Upper lobe of right lung (tissue), 1 donor: ENCODE measurements at regions of chr10 and their contacts with region 1.

Region 1: GRCh38 chr10:110141871-110142635 is 65.4 kb upstream of the MXI1 start:
- DNase-seq: peak; percentile 73
- ATAC-seq: peak; percentile 78
- H3K4me3 ChIP-seq: no peak overlapping the region
- H3K27ac ChIP-seq: no peak overlapping the region
- H3K4me1 ChIP-seq: peaks cover 21% of the 10 kb centered on the region
- H3K27me3 ChIP-seq: no peaks in the 10 kb centered on the region
- CTCF ChIP-seq: no peak

Region 2: GRCh38 chr10:110036640-110037039 is 105.4 kb before region 1 on chr10:
- intact Hi-C with region 1: no loop called
- DNase-seq: no peak
- ATAC-seq: no peak
- H3K4me3 ChIP-seq: no peak overlapping the region
- H3K27ac ChIP-seq: no peak overlapping the region
- H3K4me1 ChIP-seq: peaks cover 23% of the 10 kb centered on the region
- H3K27me3 ChIP-seq: no peaks in the 10 kb centered on the region
- CTCF ChIP-seq: no peak

Region 3: DNA sequence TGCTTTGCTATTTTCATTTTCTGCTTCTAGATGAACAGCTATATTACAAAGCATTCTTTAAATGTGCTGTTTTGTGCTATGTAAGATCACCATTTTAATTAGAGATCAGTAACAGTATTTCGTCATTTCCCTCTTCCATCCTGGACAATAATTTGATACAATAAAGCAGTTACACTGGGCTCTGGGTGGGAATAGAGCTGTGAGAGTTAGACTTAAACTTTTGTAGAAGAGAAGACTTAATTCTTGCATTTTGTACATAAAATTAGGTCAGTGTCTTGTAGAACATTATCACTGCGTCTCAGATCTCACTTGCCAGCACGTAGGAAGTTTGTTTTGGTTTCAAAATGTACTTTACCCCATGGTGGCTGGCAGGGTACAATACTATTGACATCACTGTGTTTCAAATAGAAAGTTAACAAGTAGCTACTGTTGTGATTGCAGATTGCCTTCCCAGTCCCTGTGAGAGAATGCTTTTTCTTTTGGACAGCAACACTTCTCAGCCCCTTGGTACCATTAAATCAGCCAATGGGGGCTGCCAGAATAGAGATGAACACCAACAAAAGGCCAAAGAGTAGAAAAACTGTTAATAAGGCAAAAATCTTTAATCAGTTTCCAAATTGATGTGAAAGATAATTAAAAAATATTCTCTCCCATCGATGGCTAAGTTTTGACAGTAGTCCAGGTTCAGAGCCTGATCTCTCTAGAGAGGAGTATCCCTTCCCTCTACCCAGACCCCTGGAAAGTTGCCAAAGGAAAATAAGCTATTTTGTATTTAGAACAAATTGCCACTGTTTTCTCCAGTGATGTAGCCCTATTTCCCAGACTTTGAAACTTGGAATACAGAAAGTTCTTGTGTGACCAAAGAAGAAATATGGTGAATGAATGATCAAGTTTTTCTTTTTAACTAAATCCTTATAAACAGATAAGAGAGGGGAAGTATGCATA is 127.6 kb after region 1 on chr10:
- intact Hi-C with region 1: loop called (anchors 5 kb)
- DNase-seq: no peak
- ATAC-seq: peak; percentile 77
- H3K4me3 ChIP-seq: peak overlapping the region; percentile 33
- H3K27ac ChIP-seq: peak overlapping the region; percentile 65
- H3K4me1 ChIP-seq: peaks cover 26% of the 10 kb centered on the region
- H3K27me3 ChIP-seq: no peaks in the 10 kb centered on the region
- CTCF ChIP-seq: no peak